H1 (cell line): ENCODE measurements at regions of chr16 and their contacts with region 1.

Region 1: DNA sequence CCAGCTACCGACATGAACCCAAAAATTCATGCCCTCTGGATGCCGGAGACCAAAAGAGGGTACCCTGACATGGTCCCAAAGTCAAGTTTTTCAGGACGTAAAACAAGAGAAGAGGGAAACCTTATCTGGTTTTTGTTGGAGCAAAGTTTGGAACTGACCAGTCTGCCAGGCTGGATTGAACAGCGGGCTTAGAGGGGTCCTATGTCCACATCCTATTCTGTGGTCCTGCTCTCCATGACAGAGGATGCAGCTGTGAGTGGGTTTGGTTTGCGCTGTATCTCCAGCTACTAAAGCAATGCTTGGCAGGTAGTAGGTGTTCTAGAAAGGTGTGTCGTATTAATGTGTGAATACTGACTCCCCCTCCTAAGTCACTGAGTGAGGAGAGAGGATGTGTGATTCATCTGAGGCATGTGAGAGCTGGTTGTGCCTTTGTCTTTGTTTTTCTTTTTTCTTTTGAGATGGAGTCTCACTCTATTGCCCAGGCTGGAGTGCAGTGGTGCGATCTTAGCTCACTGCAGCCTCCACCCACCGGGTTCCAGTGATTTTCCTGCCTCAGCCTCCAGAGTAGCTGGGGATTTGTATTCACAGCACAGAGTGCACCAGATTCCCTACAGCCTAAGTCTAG is 31.0 kb downstream of the PMM2 start:
- DNase-seq: no peak
- H3K4me3 ChIP-seq: no peak overlapping the region
- H3K27ac ChIP-seq: no peak overlapping the region
- H3K4me1 ChIP-seq: peaks cover 12 to 23% (median 16%) of the 10 kb centered on the region in 4 experiments
- H3K27me3 ChIP-seq: no peaks in the 10 kb centered on the region
- CTCF ChIP-seq: no peak
- EP300 ChIP-seq: no peak
- POLR2A ChIP-seq: 0 out of 3 replicates have a peak, but pooled peaks of 1 of the 2 experiments have one; percentile 17
- RAD21 ChIP-seq: no peak

Region 2: DNA sequence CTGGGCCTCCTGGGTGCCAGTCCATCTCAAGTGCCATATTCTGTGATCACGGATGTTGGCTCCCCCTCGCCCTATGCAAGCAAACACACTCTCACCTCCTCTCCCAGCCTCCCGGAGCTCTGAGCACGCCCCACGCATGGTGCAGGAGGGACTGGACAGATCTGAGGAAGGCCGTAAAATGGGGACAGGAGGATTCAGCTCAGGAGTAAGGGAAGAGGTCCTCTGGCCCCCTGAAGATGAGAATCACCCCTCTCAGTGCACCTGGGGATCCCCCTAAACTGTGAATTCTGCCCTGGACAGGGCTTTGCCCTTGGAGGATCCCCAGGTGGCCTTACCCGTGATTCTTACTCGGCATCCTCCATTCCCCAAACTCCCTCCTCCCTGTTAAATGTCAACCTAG is 46.9 kb before region 1 on chr16:
- CTCF ChIA-PET with region 1: no interaction called
- POLR2A ChIA-PET with region 1: no interaction called
- DNase-seq: no peak
- H3K4me3 ChIP-seq: no peak overlapping the region
- H3K27ac ChIP-seq: no peak overlapping the region
- H3K4me1 ChIP-seq: no peaks in the 10 kb centered on the region; a peak in 1 of 7 replicates
- H3K27me3 ChIP-seq: no peaks in the 10 kb centered on the region
- CTCF ChIP-seq: no peak
- EP300 ChIP-seq: no peak
- POLR2A ChIP-seq: no peak
- RAD21 ChIP-seq: no peak

Region 3: DNA sequence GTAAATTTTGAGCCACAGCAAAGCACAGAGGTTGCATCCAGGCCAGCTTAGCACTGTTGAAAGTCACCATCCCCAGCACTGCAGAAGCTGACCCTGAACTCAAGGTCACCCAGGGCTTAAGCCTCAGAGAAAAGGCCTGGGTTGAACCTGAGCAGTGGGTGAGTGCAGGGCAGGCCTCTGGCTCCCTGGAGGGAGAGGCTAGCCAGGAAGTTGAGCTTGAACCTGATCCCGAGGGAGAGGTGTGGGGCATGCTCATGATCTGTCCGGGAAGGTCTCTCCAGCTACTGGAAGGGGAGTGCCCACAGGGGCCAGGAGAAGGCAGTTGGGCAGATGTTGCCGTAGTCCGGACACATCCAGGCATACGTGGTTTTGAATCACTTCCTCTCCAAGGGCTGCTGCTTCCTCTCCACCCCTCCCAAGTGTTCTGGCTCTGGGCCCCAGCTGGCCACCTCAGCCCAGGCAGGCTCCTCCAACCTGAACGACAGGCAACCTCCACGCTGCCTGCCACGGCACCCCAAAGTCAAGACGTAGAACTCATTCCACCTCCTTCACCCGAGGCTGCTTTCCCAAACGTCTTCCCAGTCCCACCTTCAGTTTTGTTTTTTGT is 21.7 kb after region 1 on chr16:
- CTCF ChIA-PET with region 1: interaction called, 4 read pairs
- POLR2A ChIA-PET with region 1: interaction called, 25 read pairs
- DNase-seq: no peak
- H3K4me3 ChIP-seq: no peak overlapping the region
- H3K27ac ChIP-seq: no peak overlapping the region
- H3K4me1 ChIP-seq: peaks cover 0 to 19% (median 9%) of the 10 kb centered on the region in 4 experiments; a peak in 6 of 7 replicates
- H3K27me3 ChIP-seq: no peaks in the 10 kb centered on the region
- CTCF ChIP-seq: no peak
- EP300 ChIP-seq: no peak
- POLR2A ChIP-seq: peak; percentile 47 to 62; a peak in 1 of 3 replicates
- RAD21 ChIP-seq: no peak

Region 4: DNA sequence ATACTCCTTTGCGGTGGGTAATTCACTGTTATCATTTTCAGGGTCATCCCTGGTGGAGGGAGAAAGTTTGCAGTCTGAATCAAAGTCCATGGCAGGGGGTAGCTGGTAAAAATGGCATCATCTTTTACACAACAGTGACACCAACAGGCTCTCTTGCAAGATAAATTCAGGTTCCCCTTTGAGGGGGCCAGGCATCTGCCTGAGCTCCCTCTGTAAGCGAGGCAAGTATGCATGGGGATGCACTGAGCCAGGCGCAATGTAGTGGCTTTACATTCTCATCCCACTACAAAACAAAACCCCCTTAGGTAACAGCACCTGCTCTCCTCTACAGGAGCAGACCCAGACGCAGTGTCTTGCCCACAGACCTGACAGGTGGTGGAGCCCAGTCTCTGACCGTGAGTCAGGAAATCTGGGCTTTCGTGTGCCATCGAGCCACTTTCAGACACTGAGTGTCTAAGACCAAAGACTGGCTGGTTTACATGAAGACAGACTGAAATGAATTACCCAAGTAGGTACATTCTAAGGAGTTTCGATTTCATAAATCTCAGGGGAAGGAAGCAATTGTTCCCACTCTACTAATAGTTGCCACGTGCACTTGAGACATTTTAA is 71.2 kb after region 1 on chr16:
- CTCF ChIA-PET with region 1: no interaction called
- POLR2A ChIA-PET with region 1: no interaction called
- DNase-seq: no peak
- H3K4me3 ChIP-seq: no peak overlapping the region
- H3K27ac ChIP-seq: no peak overlapping the region
- H3K4me1 ChIP-seq: no peaks in the 10 kb centered on the region; a peak in 2 of 7 replicates
- H3K27me3 ChIP-seq: no peaks in the 10 kb centered on the region
- CTCF ChIP-seq: peak in 2 of 3 experiments; percentile 11 to 16; a peak in 3 of 4 replicates
- EP300 ChIP-seq: no peak
- POLR2A ChIP-seq: no peak
- RAD21 ChIP-seq: peak; percentile 24 to 36; a peak in 3 of 4 replicates